ENCODE measurements at regions of chr20 and their contacts with region 1.

Region 1: DNA sequence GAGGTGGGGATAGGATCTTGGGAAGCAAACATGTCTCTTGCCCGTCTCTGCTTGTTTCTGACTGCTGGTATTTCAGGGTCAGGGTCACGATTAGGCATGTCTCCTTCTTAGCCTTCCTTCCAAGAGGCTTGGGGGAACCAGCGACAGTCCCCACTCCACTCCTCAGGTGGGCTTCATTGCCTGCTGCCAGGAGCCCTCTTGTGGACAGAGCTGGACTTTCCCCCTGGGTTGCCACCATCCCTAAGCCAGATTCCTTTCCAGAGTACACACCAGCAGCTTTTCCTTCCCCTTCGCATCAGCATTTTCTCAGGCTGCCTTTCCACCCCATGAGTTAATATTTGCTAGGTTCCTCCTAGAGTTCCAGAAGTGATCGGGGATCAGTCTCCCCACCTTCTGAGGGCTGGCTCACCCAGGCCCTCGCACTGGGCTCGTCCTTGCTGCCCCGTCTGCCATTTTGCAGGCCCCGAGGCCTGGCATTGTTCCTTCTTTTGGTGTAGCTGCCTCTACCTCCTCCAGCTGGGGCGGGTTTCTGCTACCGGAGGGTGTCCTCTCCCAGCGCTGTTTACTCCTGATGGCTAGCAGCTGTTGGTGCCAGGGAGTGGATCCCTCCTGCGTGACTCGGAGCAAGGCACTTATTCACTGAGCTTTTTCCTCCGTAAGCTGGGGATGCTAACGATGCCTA is 8.8 kb upstream of the C20orf144 start:
- H3K4me3 ChIP-seq: no peak overlapping the region
- H3K27ac ChIP-seq: no peak overlapping the region
- H3K4me1 ChIP-seq: no peaks in the 10 kb centered on the region
- CTCF ChIP-seq: peak; percentile 93

Region 2: GRCh38 chr20:33183312-33183711 is 470.0 kb before region 1 on chr20:
- CTCF ChIA-PET with region 1: no interaction called
- POLR2A ChIA-PET with region 1: no interaction called
- H3K4me3 ChIP-seq: no peak overlapping the region
- H3K27ac ChIP-seq: no peak overlapping the region
- H3K4me1 ChIP-seq: no peaks in the 10 kb centered on the region
- CTCF ChIP-seq: no peak

Region 3: GRCh38 chr20:33460711-33461110 is 192.6 kb before region 1 on chr20:
- CTCF ChIA-PET with region 1: interaction called, 16 read pairs
- POLR2A ChIA-PET with region 1: no interaction called
- H3K4me3 ChIP-seq: no peak overlapping the region
- H3K27ac ChIP-seq: no peak overlapping the region
- H3K4me1 ChIP-seq: no peaks in the 10 kb centered on the region
- CTCF ChIP-seq: no peak

Region 4: GRCh38 chr20:33693741-33694638 is 40.6 kb after region 1 on chr20:
- CTCF ChIA-PET with region 1: no interaction called
- POLR2A ChIA-PET with region 1: no interaction called
- H3K4me3 ChIP-seq: no peak overlapping the region
- H3K27ac ChIP-seq: no peak overlapping the region
- H3K4me1 ChIP-seq: no peaks in the 10 kb centered on the region
- CTCF ChIP-seq: no peak

Measured in HEK293 (cell line).